Activated CD8-positive, alpha-beta T cell treated with anti-CD3 and anti-CD28 coated beads for 36 hours (primary cell): ENCODE measurements at regions of chr4 and their contacts with region 1.

Region 1: GRCh38 chr4:108109997-108110416 is 58.7 kb downstream of the LEF1 start:
- DNase-seq: no peak
- ATAC-seq: peak; percentile 20
- H3K4me3 Mint-ChIP-seq: peak overlapping the region; percentile 44
- H3K27ac Mint-ChIP-seq: peak overlapping the region; percentile 96
- H3K4me1 Mint-ChIP-seq: peaks cover 88% of the 10 kb centered on the region
- H3K27me3 Mint-ChIP-seq: no peaks in the 10 kb centered on the region
- CTCF ChIP-seq: no peak

Region 2: DNA sequence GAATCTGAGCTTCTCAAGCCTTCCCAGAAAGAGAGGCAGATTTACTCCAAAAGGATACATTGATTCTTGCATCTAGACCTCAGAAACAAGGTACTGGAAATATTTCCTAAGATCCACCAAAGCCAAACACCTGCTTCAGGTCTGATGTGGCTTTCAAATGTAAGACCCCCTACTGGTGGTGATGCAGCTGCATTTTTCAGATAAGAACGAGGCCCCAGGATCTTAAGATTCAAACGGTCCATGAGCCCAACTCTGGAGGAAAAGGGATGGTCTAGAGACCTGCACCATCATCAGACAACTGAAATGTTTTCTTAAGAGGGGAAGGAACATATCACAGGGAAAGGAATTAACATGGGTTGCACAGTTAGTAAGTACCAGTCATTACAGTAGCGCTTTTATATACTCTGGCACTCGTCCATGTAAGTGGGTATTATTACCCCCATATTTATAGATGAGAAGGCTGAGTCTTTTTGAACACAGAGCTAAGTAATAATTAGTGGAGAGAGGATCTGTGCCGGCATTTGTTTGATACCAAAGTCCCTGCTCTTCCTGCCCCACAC is 15.0 kb before region 1 on chr4:
- CTCF ChIA-PET with region 1: interaction called, 16 read pairs
- POLR2A ChIA-PET with region 1: interaction called, 46 read pairs
- intact Hi-C with region 1: no loop called
- DNase-seq: no peak
- ATAC-seq: peak; percentile 18
- H3K4me3 Mint-ChIP-seq: no peak overlapping the region
- H3K27ac Mint-ChIP-seq: peak overlapping the region; percentile 70
- H3K4me1 Mint-ChIP-seq: peaks cover 84% of the 10 kb centered on the region
- H3K27me3 Mint-ChIP-seq: no peaks in the 10 kb centered on the region
- CTCF ChIP-seq: peak; percentile 49

Region 3: DNA sequence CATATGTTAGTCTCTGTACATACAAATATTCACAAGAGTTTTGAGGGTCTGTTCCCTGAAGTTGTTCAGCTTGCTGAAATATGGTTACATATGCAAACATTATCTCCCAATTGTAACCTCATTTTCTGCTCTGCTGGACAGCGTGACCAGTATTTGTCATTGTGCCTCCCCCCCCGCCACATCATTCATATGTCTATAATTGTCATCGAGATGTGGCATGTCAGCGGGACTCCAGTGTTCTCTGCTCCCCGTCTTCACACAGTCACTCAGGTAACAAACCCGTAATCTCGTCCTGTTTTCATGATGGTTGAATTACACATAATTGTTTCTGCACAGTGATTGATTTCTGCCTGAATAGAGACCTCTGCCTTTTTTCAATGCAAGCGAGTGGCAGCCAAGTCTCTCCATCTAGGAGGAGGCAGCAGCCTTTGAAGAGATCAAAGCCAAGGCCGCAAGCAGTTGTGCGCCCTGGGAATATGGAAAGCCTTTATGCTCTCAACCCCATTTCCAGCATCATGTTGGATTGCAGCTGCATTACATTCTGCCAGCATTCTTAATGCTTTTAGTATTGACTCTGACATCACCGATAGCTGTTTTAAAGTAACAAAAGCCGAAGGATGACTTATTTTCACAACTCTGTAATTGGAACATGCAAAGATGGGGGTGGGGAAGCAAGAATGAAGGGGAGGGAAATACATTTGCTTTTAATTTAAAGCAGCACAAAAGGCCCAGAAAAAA is 31.4 kb after region 1 on chr4:
- CTCF ChIA-PET with region 1: interaction called, 12 read pairs
- POLR2A ChIA-PET with region 1: interaction called, 12 read pairs
- intact Hi-C with region 1: loop called (anchors 5 kb)
- DNase-seq: peak; percentile 69
- ATAC-seq: peak; percentile 37
- H3K4me3 Mint-ChIP-seq: peak overlapping the region; percentile 72
- H3K27ac Mint-ChIP-seq: peak overlapping the region; percentile 96
- H3K4me1 Mint-ChIP-seq: peaks cover 79% of the 10 kb centered on the region
- H3K27me3 Mint-ChIP-seq: no peaks in the 10 kb centered on the region
- CTCF ChIP-seq: no peak